ENCODE measurements at regions of chr11 and their contacts with region 1.

Region 1: GRCh38 chr11:1921574-1922141 is 2.2 kb downstream of the TNNT3 start:
- DNase-seq: no peak
- H3K4me3 ChIP-seq: no peak overlapping the region
- CTCF ChIP-seq: no peak
- POLR2A ChIP-seq: no peak

Region 2: GRCh38 chr11:1863352-1864216 is 58.1 kb before region 1 on chr11:
- intact Hi-C with region 1: no loop called
- DNase-seq: peak; percentile 77 to 96
- H3K4me3 ChIP-seq: no peak overlapping the region
- CTCF ChIP-seq: no peak
- POLR2A ChIP-seq: no peak

Region 3: GRCh38 chr11:1882519-1883238 is 39.0 kb before region 1 on chr11:
- intact Hi-C with region 1: loop called (anchors 5 kb)
- DNase-seq: peak in 1 of 2 donors; percentile 95
- H3K4me3 ChIP-seq: no peak overlapping the region
- CTCF ChIP-seq: peak in 1 of 3 donors; percentile 50
- POLR2A ChIP-seq: no peak

Region 4: DNA sequence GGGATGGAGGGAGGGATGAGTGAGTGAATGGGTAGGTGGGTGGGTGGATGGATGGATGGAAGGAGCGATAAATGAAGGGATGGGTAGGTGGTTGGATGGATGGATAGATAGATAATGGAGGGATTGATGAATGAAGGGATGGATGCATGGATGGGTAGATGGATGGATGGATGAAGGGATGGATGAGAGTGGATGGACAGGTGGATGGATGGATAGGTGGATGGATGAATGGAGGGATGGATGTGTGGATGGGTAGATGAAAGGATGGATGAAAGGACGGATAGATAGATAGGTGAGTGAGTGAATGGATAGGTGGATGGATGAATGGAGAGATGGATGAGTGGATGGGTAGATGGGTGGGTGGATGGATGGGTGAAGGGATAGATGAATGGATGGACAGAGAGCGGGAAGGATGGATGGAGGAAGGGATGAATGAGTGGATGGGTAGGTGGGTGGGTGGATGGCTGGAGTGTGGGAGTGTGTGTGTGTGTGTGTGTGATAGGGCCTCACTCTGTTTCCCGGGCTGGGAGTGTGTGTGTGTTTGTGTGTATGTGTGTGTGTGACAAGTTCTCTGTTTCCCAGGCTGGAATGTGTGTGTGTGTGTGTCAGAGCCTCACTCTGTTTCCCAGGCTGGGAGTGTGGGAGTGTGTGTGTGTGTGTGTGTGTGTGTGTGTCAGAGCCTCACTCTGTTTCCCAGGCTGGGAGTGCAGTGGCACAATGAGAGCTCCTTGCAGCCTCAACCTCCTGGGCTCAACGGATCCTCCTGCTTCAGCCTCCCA is 27.9 kb before region 1 on chr11:
- intact Hi-C with region 1: loop called (anchors 1 kb)
- DNase-seq: no peak
- H3K4me3 ChIP-seq: no peak overlapping the region
- CTCF ChIP-seq: no peak
- POLR2A ChIP-seq: no peak

Measured in lower leg skin (tissue), 4 donors.